IMR-90 (cell line): ENCODE measurements at regions of chr11 and their contacts with region 1.

Region 1: DNA sequence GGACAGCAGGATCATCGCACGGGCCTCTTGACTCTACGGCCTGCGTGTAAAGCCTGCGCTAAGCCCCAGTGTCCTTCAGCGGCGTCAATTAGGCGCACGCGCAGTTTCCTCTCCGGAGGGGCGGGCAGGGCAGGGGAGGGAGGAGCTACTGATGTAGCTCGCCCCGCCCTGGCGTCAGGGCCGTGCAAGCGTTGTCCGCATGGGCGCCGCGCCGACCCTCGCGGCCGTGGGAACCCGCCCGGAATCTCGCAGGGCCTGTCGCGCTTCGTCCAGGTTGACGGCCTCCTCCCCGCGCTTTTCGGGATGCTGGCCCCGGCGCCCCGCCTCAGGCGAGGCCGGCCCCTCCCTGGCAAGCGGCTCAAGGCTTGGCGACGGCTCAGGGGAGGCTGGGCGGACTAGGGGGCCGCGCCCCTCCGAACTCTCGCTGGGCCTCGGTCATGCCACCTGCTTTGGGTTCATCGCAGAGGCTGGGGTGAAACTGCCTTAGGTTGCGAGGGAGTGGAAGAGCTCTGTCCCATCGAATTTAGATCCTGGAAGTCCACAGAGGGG is 61.1 kb downstream of the ST3GAL4 start:
- DNase-seq: peak; percentile 68
- ATAC-seq: peak; percentile 89
- H3K4me3 ChIP-seq: peak overlapping the region; percentile 42
- H3K27ac ChIP-seq: peak overlapping the region; percentile 64
- H3K4me1 ChIP-seq: peaks cover 29% of the 10 kb centered on the region
- H3K27me3 ChIP-seq: no peaks in the 10 kb centered on the region
- CTCF ChIP-seq: no peak
- POLR2A ChIP-seq: no peak
- RAD21 ChIP-seq: no peak

Region 2: GRCh38 chr11:126293726-126294125 is 122.9 kb before region 1 on chr11:
- CTCF ChIA-PET with region 1: no interaction called
- POLR2A ChIA-PET with region 1: interaction called, 13 read pairs
- dilution Hi-C with region 1: no loop called
- in situ Hi-C with region 1: no loop called
- intact Hi-C with region 1: no loop called
- DNase-seq: no peak
- ATAC-seq: no peak
- H3K4me3 ChIP-seq: no peak overlapping the region
- H3K27ac ChIP-seq: no peak overlapping the region
- H3K4me1 ChIP-seq: no peaks in the 10 kb centered on the region
- H3K27me3 ChIP-seq: no peaks in the 10 kb centered on the region
- CTCF ChIP-seq: no peak
- POLR2A ChIP-seq: no peak
- RAD21 ChIP-seq: no peak

Region 3: DNA sequence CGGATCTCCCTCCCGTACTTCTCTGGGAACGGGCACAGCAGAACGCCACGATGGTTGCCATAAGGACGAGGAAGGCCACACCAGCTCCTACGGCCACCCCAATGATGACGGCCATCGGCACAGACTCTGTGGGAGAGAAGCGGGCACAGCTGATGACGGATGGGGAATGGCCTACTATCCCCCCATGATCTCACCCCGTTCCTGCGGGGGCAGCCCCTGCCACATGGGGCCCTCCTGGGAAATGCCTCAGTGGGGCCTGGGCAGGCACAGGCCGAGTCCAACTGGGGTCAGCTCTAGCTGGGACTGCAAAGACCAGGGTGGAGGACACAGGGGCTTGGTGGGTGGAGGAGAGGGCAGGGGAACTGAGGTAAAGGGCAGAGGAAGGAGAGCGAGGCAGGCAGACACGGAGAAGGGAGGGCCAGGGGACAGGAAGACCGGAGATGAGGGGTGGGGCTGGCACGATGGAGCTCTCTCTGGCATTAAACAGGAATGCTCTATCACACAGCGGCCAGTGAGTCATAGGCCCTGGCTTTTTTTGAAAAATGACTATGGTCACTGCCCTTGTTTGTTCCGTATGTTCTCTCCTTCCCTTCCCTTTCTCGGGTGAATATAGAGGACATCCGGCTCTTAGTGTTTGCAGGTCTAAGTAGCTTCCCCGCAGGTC is 14.9 kb after region 1 on chr11:
- CTCF ChIA-PET with region 1: no interaction called
- POLR2A ChIA-PET with region 1: no interaction called
- dilution Hi-C with region 1: no loop called
- in situ Hi-C with region 1: no loop called
- intact Hi-C with region 1: no loop called
- DNase-seq: peak; percentile 72
- ATAC-seq: peak; percentile 87
- H3K4me3 ChIP-seq: no peak overlapping the region
- H3K27ac ChIP-seq: peak overlapping the region; percentile 47
- H3K4me1 ChIP-seq: peaks cover 12% of the 10 kb centered on the region
- H3K27me3 ChIP-seq: no peaks in the 10 kb centered on the region
- CTCF ChIP-seq: no peak
- POLR2A ChIP-seq: no peak
- RAD21 ChIP-seq: no peak